OCI-LY7 (cell line): ENCODE measurements at regions of chr14 and their contacts with region 1.

Region 1: DNA sequence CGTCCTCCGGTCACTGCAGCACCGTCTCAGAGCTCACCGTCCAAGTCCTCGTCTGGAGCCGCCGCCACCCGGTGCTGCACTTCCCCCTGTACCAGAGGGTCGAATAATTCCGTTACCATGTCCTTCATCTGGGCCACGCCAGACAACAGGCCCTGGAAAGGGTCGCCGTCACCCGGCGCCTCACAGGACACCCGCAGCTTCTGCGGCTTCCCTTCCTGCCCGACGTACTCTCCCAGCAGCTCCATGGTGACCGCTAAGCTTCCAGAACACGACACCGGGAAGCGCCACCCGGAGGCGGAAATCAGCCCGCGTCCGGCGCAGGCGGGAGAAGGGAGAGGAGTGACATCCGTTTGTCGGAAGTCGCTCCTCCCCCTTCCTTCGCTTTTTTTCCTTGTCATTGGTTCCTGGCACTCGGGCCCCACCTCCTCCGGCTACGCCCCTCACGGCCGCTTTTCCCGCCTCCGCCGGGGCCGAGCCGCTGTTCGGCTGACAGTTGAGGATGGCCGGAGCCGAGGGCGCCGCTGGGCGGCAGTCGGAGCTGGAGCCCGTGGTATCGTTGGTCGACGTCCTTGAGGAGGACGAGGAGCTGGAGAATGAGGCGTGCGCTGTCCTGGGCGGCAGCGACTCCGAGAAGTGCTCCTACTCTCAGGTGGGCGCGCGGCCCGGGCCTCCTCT is at the starts of genes GON7 and UBR7:
- DNase-seq: peak; percentile 94
- H3K4me3 ChIP-seq: peak within 1 kb of the TSS; percentile 84
- H3K27ac ChIP-seq: peak within 1 kb of the TSS; percentile 66
- H3K4me1 ChIP-seq: peaks cover 66% of the 10 kb centered on the region
- CTCF ChIP-seq: no peak
- total RNA-seq, gene GON7: 54.8 and 78.7 TPM in 2 replicates
- total RNA-seq, gene UBR7: 45.1 and 76.5 TPM in 2 replicates

Region 2: GRCh38 chr14:93184388-93185353 is 22.3 kb before region 1 on chr14 and contains the starts of genes LYSET and MOAP1:
- CTCF ChIA-PET with region 1: interaction called, 3 read pairs
- POLR2A ChIA-PET with region 1: interaction called, 17 read pairs
- intact Hi-C with region 1: loop called (anchors 1 kb)
- DNase-seq: peak; percentile 93
- H3K4me3 ChIP-seq: peak within 1 kb of the TSS; percentile 100
- H3K27ac ChIP-seq: peak within 1 kb of the TSS; percentile 87
- H3K4me1 ChIP-seq: peaks cover 21% of the 10 kb centered on the region
- CTCF ChIP-seq: peak; percentile 64
- total RNA-seq, gene LYSET: 9.3 and 12.0 TPM in 2 replicates
- total RNA-seq, gene MOAP1: 31.2 and 34.3 TPM in 2 replicates

Region 3: GRCh38 chr14:93195316-93195999 is 11.5 kb before region 1 on chr14:
- CTCF ChIA-PET with region 1: no interaction called
- POLR2A ChIA-PET with region 1: interaction called, 13 read pairs
- intact Hi-C with region 1: no loop called
- DNase-seq: no peak
- H3K4me3 ChIP-seq: no peak overlapping the region
- H3K27ac ChIP-seq: no peak overlapping the region
- H3K4me1 ChIP-seq: peaks cover 8% of the 10 kb centered on the region
- CTCF ChIP-seq: no peak

Region 4: GRCh38 chr14:93234798-93235197 is 27.9 kb after region 1 on chr14:
- CTCF ChIA-PET with region 1: no interaction called
- POLR2A ChIA-PET with region 1: no interaction called
- intact Hi-C with region 1: no loop called
- DNase-seq: no peak
- H3K4me3 ChIP-seq: no peak overlapping the region
- H3K27ac ChIP-seq: no peak overlapping the region
- H3K4me1 ChIP-seq: no peaks in the 10 kb centered on the region
- CTCF ChIP-seq: no peak

Region 5: GRCh38 chr14:93332853-93333630 is 126.1 kb after region 1 on chr14 and contains the start of gene BTBD7:
- CTCF ChIA-PET with region 1: no interaction called
- POLR2A ChIA-PET with region 1: no interaction called
- intact Hi-C with region 1: loop called (anchors 2 kb)
- DNase-seq: peak; percentile 95
- H3K4me3 ChIP-seq: peak within 1 kb of the TSS; percentile 75
- H3K27ac ChIP-seq: peak within 1 kb of the TSS; percentile 62
- H3K4me1 ChIP-seq: peaks cover 34% of the 10 kb centered on the region
- CTCF ChIP-seq: no peak
- total RNA-seq, gene BTBD7: 9.7 and 10.7 TPM in 2 replicates

Region 6: GRCh38 chr14:93369713-93370266 is 162.9 kb after region 1 on chr14:
- CTCF ChIA-PET with region 1: no interaction called
- POLR2A ChIA-PET with region 1: no interaction called
- intact Hi-C with region 1: no loop called
- DNase-seq: peak; percentile 34
- H3K4me3 ChIP-seq: no peak overlapping the region
- H3K27ac ChIP-seq: no peak overlapping the region
- H3K4me1 ChIP-seq: peaks cover 17% of the 10 kb centered on the region
- CTCF ChIP-seq: no peak

Region 7: DNA sequence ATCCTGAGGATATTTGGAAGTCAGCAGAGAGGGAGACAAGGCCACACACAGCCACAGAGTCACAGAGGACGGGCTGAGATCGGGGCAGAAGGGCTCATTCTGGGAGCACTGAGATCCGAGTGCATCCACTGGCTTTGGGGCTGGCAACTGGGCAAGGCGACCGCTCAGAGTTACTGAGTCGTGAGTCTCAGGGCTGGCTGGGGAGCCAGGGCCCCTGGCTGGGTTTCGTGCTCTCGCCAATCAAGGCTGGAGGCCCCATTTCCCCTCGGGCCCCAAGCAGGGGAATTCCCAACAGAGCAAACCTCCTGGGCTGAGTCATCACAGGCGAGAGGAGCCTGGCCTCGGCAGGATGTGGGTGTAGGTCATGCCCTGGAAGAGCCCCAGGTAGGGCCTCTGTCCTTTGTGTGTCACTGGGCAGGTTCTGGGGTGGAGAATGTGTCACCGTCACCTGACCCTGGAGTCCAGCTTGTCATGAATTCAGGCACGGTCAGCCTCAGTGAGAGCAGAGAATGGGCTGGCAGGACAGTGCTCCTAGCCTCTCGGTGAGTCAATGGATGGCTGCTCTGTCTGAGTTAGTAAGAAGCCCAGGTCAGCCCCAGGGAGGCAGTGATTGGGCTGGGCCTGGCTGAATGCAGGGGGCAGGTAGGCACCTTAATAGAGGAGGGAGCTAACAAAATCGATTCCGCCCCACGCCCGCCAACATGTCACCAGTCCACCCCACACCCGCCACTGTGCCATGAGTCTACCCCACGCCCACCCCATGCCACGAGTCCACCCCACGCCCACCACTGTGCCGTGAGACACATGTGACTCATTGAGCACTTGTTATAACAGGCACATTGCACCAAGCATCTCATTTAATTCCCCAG is 752.5 kb after region 1 on chr14:
- CTCF ChIA-PET with region 1: no interaction called
- POLR2A ChIA-PET with region 1: no interaction called
- intact Hi-C with region 1: loop called (anchors 10 kb)
- DNase-seq: peak; percentile 87
- H3K4me3 ChIP-seq: peak overlapping the region; percentile 51
- H3K27ac ChIP-seq: peak overlapping the region; percentile 92
- H3K4me1 ChIP-seq: peaks cover 99% of the 10 kb centered on the region
- CTCF ChIP-seq: no peak